CD4-positive, alpha-beta memory T cell (primary cell): ENCODE measurements at regions of chr10 and their contacts with region 1.

Region 1: GRCh38 chr10:43138021-43138756 is at the start of gene CSGALNACT2:
- DNase-seq: peak; percentile 88 to 91 (median 90)
- H3K4me3 ChIP-seq: peak within 1 kb of the TSS; percentile 67 to 92
- H3K4me3 Mint-ChIP-seq: peak within 1 kb of the TSS; percentile 91 to 100 (median 98)
- H3K27ac ChIP-seq: peak within 1 kb of the TSS; percentile 89
- H3K27ac Mint-ChIP-seq: peak within 1 kb of the TSS; percentile 97 to 100 (median 99)
- H3K4me1 ChIP-seq: peaks cover 49% of the 10 kb centered on the region
- H3K4me1 Mint-ChIP-seq: peaks cover 33 to 56% (median 43%) of the 10 kb centered on the region in 4 donors
- H3K27me3 ChIP-seq: no peaks in the 10 kb centered on the region
- H3K27me3 Mint-ChIP-seq: no peaks in the 10 kb centered on the region
- total RNA-seq, gene CSGALNACT2: 45.3 to 48.2 TPM

Region 2: DNA sequence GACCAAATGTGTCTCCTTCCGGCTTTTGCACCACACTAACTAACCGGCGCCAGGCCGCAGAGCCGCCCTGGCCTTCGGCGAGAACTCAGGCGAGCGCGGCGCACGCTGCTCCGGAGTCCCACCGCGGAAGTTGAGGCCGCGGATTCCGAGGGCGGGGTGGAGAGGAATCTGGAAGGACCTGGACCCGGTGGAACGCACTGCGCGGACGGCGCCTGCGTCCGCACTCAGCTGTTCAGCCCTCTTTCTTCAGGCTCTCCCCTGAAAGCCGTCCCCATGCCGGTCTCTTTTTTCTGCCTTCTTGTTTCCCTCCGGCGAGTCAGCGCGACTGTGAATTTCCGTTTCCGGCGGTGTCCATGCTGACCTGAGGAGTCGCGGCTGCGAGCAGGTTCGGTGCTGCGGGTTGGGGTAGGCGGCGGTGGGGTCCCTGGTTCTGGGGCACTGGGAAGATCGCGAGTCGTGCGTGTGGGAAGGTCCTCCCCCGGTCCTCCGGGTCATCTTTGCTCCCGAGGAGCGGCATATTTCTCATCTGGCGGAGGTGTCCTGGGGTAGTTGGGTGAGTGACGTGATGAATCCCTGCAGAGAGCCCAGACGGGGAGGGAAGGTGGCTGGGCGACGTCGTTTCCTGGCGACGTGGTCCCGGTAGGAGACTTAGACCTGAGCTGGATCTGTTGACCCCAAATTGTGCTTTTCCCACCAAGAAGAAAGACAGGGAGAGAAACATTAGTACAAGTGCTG is 355.6 kb before region 1 on chr10 and contains the start of gene BMS1:
- CTCF ChIA-PET with region 1: no interaction called
- POLR2A ChIA-PET with region 1: interaction called, 15 read pairs
- intact Hi-C with region 1: loop called (anchors 10 kb)
- DNase-seq: peak; percentile 89 to 91 (median 89)
- H3K4me3 ChIP-seq: peak within 1 kb of the TSS; percentile 47 to 88
- H3K4me3 Mint-ChIP-seq: peak within 1 kb of the TSS; percentile 96 to 99 (median 98)
- H3K27ac ChIP-seq: peak within 1 kb of the TSS; percentile 74
- H3K27ac Mint-ChIP-seq: peak within 1 kb of the TSS; percentile 93 to 99 (median 96)
- H3K4me1 ChIP-seq: peaks cover 22% of the 10 kb centered on the region
- H3K4me1 Mint-ChIP-seq: peaks cover 13 to 40% (median 29%) of the 10 kb centered on the region in 4 donors
- H3K27me3 ChIP-seq: no peaks in the 10 kb centered on the region
- H3K27me3 Mint-ChIP-seq: peaks cover 2% of the 10 kb centered on the region in 2 donors
- total RNA-seq, gene BMS1: 17.3 to 18.9 TPM

Region 3: GRCh38 chr10:43026011-43026973 is 111.9 kb before region 1 on chr10:
- CTCF ChIA-PET with region 1: no interaction called
- POLR2A ChIA-PET with region 1: no interaction called
- intact Hi-C with region 1: no loop called
- DNase-seq: no peak
- H3K4me3 ChIP-seq: no peak overlapping the region
- H3K4me3 Mint-ChIP-seq: no peak overlapping the region
- H3K27ac ChIP-seq: no peak overlapping the region
- H3K27ac Mint-ChIP-seq: no peak overlapping the region
- H3K4me1 ChIP-seq: no peaks in the 10 kb centered on the region
- H3K4me1 Mint-ChIP-seq: no peaks in the 10 kb centered on the region
- H3K27me3 ChIP-seq: no peaks in the 10 kb centered on the region
- H3K27me3 Mint-ChIP-seq: peaks cover 5 to 17% of the 10 kb centered on the region in 2 donors

Region 4: DNA sequence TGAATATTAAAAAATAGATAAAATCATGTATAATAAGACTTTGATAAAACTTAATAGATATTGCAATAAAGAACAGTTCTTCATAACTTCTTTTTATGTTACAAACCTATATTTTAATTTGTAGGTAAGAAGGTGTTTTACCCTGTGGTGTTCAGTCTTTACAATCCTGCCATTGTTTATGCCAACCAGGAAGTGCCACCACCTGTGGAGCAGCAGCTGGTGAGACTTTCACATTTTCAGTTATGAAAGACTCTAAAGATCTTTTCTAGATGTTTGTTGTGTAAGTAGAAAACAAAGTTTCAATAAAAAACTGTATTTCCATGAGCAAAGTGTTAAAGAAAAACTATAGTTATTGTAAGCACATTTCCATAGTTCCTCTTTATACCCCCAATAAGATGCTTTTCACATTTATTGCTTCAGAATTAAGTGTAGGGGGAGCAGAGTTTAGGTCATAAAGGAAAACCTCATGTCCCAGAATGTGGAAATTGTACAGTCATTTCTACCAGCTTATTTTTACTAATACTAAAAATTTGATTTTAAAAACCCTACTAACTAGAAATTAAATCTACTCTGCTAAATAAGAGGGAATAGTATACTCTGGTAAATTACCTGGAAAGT is 28.8 kb after region 1 on chr10:
- CTCF ChIA-PET with region 1: interaction called, 6 read pairs
- POLR2A ChIA-PET with region 1: interaction called, 21 read pairs
- intact Hi-C with region 1: loop called (anchors 2 kb)
- DNase-seq: no peak
- H3K4me3 ChIP-seq: no peak overlapping the region
- H3K4me3 Mint-ChIP-seq: no peak overlapping the region
- H3K27ac ChIP-seq: no peak overlapping the region
- H3K27ac Mint-ChIP-seq: peak overlapping the region in 2 of 7 donors; percentile 25 to 46
- H3K4me1 ChIP-seq: no peaks in the 10 kb centered on the region
- H3K4me1 Mint-ChIP-seq: peaks cover 12 to 41% (median 28%) of the 10 kb centered on the region in 4 donors
- H3K27me3 ChIP-seq: no peaks in the 10 kb centered on the region
- H3K27me3 Mint-ChIP-seq: no peaks in the 10 kb centered on the region

Region 5: DNA sequence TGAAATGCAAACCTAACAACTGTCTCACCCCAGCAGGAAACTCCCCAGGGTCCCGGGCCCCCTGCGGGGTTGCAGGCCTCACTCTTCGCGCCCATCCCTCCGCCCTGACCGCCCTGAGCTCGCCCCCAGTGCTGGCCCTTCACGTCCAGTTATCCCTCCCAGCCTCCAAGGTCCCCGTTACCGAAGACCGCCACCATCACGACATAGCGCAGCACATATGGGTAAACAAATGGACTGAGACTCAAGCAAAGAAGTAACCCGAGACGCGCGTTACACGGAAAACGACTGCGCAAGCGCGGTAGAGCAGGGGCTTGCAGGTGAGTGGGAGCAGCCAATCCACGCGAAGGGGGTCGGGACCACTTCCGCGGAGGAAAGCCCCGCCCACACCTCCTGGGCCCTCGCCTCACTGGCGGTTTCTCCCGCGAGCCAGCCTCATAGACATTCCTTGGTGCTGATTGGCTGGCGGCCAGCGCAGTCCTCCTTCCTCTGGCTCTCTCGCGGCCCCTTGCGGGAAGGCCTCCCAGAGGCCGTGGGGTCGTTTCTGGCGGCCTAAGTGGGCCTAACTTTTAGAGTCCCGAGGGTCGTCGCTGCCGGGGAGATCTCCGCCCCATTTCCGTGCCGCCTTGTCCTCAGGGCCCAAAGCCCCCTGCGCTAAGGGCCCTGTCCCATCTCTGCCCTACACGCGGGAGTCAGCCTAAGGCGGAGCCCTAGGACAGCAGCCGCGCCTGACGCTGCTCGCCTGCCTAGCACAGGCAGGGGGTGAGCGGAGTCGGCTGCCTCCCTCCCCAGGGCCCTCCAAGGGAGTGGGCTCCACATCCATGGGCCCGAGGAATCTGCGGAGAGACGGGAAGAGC is 224.0 kb after region 1 on chr10:
- CTCF ChIA-PET with region 1: no interaction called
- POLR2A ChIA-PET with region 1: interaction called, 11 read pairs
- intact Hi-C with region 1: loop called (anchors 5 kb)
- DNase-seq: peak; percentile 96 to 98 (median 98)
- H3K4me3 ChIP-seq: peak overlapping the region; percentile 82 to 97
- H3K4me3 Mint-ChIP-seq: peak overlapping the region; percentile 95 to 100 (median 98)
- H3K27ac ChIP-seq: peak overlapping the region; percentile 92
- H3K27ac Mint-ChIP-seq: peak overlapping the region; percentile 97 to 99 (median 98)
- H3K4me1 ChIP-seq: peaks cover 19% of the 10 kb centered on the region
- H3K4me1 Mint-ChIP-seq: peaks cover 21 to 34% (median 27%) of the 10 kb centered on the region in 4 donors
- H3K27me3 ChIP-seq: no peaks in the 10 kb centered on the region
- H3K27me3 Mint-ChIP-seq: no peaks in the 10 kb centered on the region

Region 6: DNA sequence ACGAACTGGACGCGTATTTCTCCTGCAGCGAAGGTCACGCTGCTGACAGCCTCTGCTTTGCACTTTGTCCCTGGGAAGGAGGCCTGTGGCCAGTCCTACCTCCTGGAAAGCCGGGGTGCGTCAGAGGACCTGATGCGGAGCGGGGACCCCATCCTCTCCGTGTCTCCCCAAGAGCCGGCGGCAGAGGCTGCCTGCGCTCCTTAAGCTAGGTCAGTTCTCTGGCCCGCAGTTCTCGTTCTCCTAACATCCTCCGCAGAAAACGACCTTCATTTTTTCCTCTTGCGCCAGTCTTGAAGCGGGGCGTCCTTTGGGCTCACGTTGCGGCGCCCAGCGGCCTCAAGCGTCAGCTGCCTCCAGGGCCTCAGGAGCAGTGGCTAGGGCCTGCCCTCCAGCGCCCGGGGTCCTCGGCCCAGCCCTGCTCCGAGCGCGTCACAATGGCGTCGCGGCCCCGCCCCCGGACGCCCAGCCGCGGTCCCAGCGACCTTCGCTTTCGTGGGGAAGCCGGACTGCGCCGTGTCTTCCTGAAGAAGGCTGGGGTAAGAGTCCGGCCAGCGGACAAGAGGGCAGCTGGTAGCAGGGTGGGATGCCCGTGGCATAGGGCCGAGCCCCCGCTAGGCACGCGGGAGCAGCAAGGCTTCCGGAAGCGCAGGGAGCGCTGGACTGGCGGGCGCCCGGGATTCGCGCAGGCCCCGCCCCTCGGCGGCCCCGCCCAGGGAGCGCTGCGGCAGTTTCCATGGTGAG is 298.4 kb after region 1 on chr10 and contains the start of gene ZNF487:
- CTCF ChIA-PET with region 1: no interaction called
- POLR2A ChIA-PET with region 1: interaction called, 6 read pairs
- intact Hi-C with region 1: loop called (anchors 1 kb)
- DNase-seq: peak; percentile 93 to 97 (median 94)
- H3K4me3 ChIP-seq: peak within 1 kb of the TSS; percentile 67 to 90
- H3K4me3 Mint-ChIP-seq: peak within 1 kb of the TSS; percentile 97 to 99 (median 97)
- H3K27ac ChIP-seq: peak within 1 kb of the TSS; percentile 96
- H3K27ac Mint-ChIP-seq: peak within 1 kb of the TSS; percentile 99 to 100 (median 99)
- H3K4me1 ChIP-seq: peaks cover 13% of the 10 kb centered on the region
- H3K4me1 Mint-ChIP-seq: peaks cover 15 to 28% (median 21%) of the 10 kb centered on the region in 4 donors
- H3K27me3 ChIP-seq: no peaks in the 10 kb centered on the region
- H3K27me3 Mint-ChIP-seq: no peaks in the 10 kb centered on the region
- total RNA-seq, gene ZNF487: 3.1 to 5.6 TPM